Pancreas (tissue), 10 donors: ENCODE measurements at regions of chr9 and their contacts with region 1.

Region 1: DNA sequence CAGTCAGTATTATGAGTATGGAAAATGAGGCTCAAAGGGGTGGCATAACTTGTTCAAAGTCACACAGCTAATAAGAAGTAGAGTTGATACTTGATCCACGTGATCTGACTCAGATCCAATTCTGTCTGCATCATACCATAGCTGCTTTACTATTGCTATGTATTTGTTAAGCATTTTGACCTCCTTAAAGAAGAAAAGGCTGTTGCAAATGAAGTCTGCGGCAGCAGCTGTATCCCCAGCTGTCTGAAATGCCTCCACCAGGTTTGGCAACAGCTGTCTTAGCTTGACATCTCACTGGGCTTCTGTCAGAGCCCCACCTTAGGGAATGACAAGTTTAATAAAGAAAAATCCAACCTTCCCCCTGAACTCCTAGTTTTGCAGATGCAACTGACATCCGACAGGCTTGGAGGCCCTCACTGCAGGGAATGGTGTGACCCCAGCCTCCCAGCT is 75.6 kb upstream of the SLC44A1 start:
- DNase-seq: no peak
- ATAC-seq: no peak
- H3K4me3 ChIP-seq: no peak overlapping the region
- H3K27ac ChIP-seq: no peak overlapping the region
- H3K4me1 ChIP-seq: no peaks in the 10 kb centered on the region
- H3K27me3 ChIP-seq: no peaks in the 10 kb centered on the region
- CTCF ChIP-seq: no peak

Region 2: DNA sequence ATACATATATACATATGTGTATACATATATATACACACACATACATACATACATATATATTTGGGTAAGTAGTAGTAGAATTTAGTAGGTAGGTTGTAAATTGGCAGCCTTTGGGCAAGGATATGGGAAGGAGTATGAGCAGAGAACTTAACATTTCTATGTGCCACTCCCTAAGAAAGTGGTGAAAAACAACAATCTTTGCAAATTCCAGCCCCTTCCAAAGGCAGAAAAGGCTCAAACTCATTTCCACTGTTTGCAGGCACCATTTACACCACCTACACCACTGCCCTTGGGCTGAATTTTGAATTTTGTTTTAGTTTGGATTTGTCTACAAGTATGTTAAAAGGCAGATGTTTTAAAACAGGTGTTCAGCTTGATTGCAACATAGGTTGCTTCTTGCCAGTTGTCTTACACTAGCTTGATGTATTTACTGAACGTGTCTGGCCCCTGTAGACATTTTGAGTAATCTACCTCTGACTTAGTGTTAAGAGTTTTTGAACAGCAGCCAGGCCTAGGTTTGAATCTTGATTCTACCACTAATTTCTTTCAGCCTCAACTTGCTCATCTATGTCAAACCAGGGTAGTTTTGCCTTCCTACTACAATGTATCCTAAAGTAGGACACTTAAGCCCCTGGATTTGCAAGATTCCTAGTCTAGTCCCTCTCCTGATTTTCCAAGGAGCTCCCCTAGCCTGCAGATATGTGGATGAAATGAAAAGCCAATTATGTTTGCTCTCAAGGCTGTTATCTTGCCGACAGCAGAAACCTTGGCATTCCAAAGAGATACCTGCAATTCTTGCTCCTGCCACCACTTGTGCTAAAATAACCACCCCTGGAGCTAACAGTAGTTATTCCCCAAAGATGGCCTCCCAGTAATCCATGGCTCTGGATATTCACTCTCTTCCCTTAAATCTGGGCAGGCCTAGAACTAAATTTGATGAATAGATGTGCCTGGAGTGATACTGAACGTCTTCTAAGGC is 80.7 kb before region 1 on chr9:
- intact Hi-C with region 1: no loop called
- DNase-seq: peak in 1 of 6 donors; percentile 18
- ATAC-seq: peak; percentile 59 to 87 (median 68)
- H3K4me3 ChIP-seq: no peak overlapping the region
- H3K27ac ChIP-seq: no peak overlapping the region
- H3K4me1 ChIP-seq: peaks cover 0 to 4% (median 3%) of the 10 kb centered on the region in 3 donors
- H3K27me3 ChIP-seq: no peaks in the 10 kb centered on the region
- CTCF ChIP-seq: no peak

Region 3: DNA sequence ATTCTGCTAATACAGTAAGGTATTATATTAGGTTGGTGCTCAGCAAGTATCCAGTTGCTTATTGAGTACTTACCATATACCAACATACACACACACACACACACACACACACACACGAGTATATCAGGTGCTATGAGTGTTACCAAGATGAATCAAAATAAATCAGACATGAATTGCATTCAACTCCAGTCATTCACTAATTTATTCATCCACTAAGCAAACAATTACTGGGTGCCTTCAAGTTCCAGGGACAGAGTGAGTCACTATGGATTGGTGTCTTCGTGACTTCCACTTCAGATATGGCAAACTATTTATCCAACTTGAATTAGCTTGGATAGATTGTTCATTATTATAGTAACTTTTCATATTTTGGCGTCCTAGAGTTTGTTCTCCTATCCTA is 65.1 kb before region 1 on chr9:
- intact Hi-C with region 1: loop called in 1 of 3 experiments (anchors 10 kb)
- DNase-seq: no peak
- ATAC-seq: peak in 1 of 4 donors; percentile 23
- H3K4me3 ChIP-seq: no peak overlapping the region
- H3K27ac ChIP-seq: no peak overlapping the region
- H3K4me1 ChIP-seq: no peaks in the 10 kb centered on the region
- H3K27me3 ChIP-seq: no peaks in the 10 kb centered on the region
- CTCF ChIP-seq: no peak

Region 4: GRCh38 chr9:105414947-105415661 is 246.2 kb after region 1 on chr9:
- intact Hi-C with region 1: loop called in 1 of 3 experiments (anchors 10 kb)
- DNase-seq: peak in 4 of 6 donors; percentile 18 to 58 (median 34)
- ATAC-seq: peak; percentile 64 to 96 (median 90)
- H3K4me3 ChIP-seq: no peak overlapping the region
- H3K27ac ChIP-seq: no peak overlapping the region
- H3K4me1 ChIP-seq: peaks cover 0 to 4% (median 0%) of the 10 kb centered on the region in 3 donors
- H3K27me3 ChIP-seq: no peaks in the 10 kb centered on the region
- CTCF ChIP-seq: peak; percentile 65 to 73 (median 70)